ENCODE measurements at regions of chr2 and their contacts with region 1.

Region 1: GRCh38 chr2:18639756-18640453 is 50.5 kb upstream of the NT5C1B start:
- DNase-seq: no peak

Region 2: DNA sequence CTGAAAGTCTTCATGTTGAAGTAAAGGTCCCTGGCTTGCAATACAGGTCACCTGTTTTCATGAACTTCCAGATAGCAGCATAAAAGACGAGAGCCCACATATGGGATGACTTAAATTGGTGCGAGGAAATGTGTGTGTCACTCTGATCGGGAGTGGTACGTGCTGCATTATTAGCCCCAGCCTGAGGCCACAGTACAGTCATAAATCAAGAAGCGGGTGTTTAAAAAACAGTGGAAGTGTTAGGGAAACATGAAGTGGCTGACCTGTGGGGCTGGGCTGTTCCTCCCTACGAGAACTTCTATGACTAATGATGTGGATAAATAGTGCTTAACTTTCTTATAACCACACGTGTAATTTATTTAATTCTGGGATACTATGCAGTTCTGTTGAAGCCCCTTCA is 103.8 kb before region 1 on chr2:
- intact Hi-C with region 1: loop called in 1 of 2 experiments (anchors 10 kb)
- DNase-seq: no peak

Measured in posterior vena cava (tissue), 2 donors.